PC-3 (cell line): ENCODE measurements at regions of chr6 and their contacts with region 1.

Region 1: GRCh38 chr6:45655630-45656422 is 278.1 kb upstream of the SUPT3H start:
- DNase-seq: peak; percentile 98
- ATAC-seq: peak; percentile 91
- H3K4me3 ChIP-seq: peak overlapping the region; percentile 3; the same call in 1 of the 2 replicates
- H3K27ac ChIP-seq: peak overlapping the region; percentile 98
- H3K4me1 ChIP-seq: peaks cover 72% of the 10 kb centered on the region
- H3K27me3 ChIP-seq: no peaks in the 10 kb centered on the region
- CTCF ChIP-seq: no peak

Region 2: DNA sequence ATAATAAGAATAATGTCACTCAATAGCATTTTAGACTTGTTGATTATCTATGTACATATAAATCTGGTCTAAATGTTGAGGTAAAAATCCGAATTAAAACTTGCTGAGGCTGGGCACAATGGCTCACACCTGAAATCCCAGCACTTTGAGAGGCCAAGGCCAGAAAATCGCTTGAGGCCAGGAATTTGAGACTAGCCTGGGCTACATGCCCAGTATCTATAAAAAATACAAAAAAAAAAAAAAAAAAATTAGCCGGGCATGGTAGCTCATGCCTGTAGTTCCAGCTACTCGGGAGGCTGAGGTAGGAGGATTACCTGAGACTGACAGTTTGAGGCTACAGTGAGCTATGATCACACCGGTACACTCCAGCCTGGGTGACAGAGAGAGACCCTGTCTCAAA is 243.9 kb before region 1 on chr6:
- CTCF ChIA-PET with region 1: no interaction called
- POLR2A ChIA-PET with region 1: no interaction called
- intact Hi-C with region 1: no loop called
- DNase-seq: peak; percentile 73
- ATAC-seq: peak; percentile 45
- H3K4me3 ChIP-seq: no peak overlapping the region
- H3K27ac ChIP-seq: no peak overlapping the region
- H3K4me1 ChIP-seq: peaks cover 20% of the 10 kb centered on the region; the same call in 1 of the 2 replicates
- H3K27me3 ChIP-seq: no peaks in the 10 kb centered on the region
- CTCF ChIP-seq: no peak

Region 3: GRCh38 chr6:45445749-45446549 is 209.9 kb before region 1 on chr6:
- CTCF ChIA-PET with region 1: no interaction called
- POLR2A ChIA-PET with region 1: no interaction called
- intact Hi-C with region 1: loop called (anchors 5 kb)
- DNase-seq: peak; percentile 99
- ATAC-seq: peak; percentile 92
- H3K4me3 ChIP-seq: peak overlapping the region; percentile 37
- H3K27ac ChIP-seq: peak overlapping the region; percentile 90
- H3K4me1 ChIP-seq: peaks cover 41% of the 10 kb centered on the region
- H3K27me3 ChIP-seq: no peaks in the 10 kb centered on the region
- CTCF ChIP-seq: no peak

Region 4: DNA sequence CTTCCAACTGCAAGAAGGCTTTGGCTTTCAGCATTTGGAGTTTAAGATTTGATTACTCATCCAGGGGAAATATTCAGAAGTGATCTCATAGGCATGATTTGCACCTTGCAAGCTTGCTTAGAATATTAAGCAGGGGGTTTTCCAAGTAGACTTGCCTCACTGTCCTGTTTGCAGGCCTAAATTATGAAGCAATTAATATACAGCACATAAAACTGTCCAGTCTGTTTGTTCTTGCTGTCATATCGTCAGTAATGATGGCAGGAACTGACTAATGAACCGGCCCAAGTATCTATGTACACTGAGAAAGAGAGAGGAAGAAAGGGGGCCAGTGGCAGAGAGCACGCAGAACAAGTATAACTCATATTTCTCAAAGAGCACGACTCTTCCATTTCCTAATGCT is 65.6 kb before region 1 on chr6:
- CTCF ChIA-PET with region 1: no interaction called
- POLR2A ChIA-PET with region 1: no interaction called
- intact Hi-C with region 1: loop called (anchors 1 kb)
- DNase-seq: peak; percentile 93
- ATAC-seq: peak; percentile 93
- H3K4me3 ChIP-seq: no peak overlapping the region
- H3K27ac ChIP-seq: peak overlapping the region; percentile 97
- H3K4me1 ChIP-seq: peaks cover 68% of the 10 kb centered on the region
- H3K27me3 ChIP-seq: no peaks in the 10 kb centered on the region
- CTCF ChIP-seq: no peak

Region 5: GRCh38 chr6:45613656-45614055 is 42.2 kb before region 1 on chr6:
- CTCF ChIA-PET with region 1: no interaction called
- POLR2A ChIA-PET with region 1: no interaction called
- intact Hi-C with region 1: loop called (anchors 1 kb)
- DNase-seq: no peak
- ATAC-seq: no peak
- H3K4me3 ChIP-seq: no peak overlapping the region
- H3K27ac ChIP-seq: no peak overlapping the region
- H3K4me1 ChIP-seq: peaks cover 27% of the 10 kb centered on the region
- H3K27me3 ChIP-seq: no peaks in the 10 kb centered on the region
- CTCF ChIP-seq: no peak